ENCODE measurements at regions of chr16 and their contacts with region 1.

Region 1: GRCh38 chr16:78249068-78249467 is 149.6 kb downstream of the WWOX start:
- DNase-seq: peak; percentile 48
- H3K4me3 Mint-ChIP-seq: no peak overlapping the region
- H3K27ac Mint-ChIP-seq: no peak overlapping the region
- H3K4me1 Mint-ChIP-seq: peaks cover 21% of the 10 kb centered on the region
- H3K27me3 Mint-ChIP-seq: no peaks in the 10 kb centered on the region
- CTCF ChIP-seq: peak; percentile 15

Region 2: GRCh38 chr16:78106686-78107085 is 142.4 kb before region 1 on chr16:
- CTCF ChIA-PET with region 1: no interaction called
- intact Hi-C with region 1: no loop called
- DNase-seq: no peak
- H3K4me3 Mint-ChIP-seq: no peak overlapping the region
- H3K27ac Mint-ChIP-seq: no peak overlapping the region
- H3K4me1 Mint-ChIP-seq: no peaks in the 10 kb centered on the region
- H3K27me3 Mint-ChIP-seq: no peaks in the 10 kb centered on the region
- CTCF ChIP-seq: no peak

Region 3: GRCh38 chr16:78375055-78375679 is 126.1 kb after region 1 on chr16:
- CTCF ChIA-PET with region 1: no interaction called
- intact Hi-C with region 1: loop called (anchors 10 kb)
- DNase-seq: no peak
- H3K4me3 Mint-ChIP-seq: no peak overlapping the region
- H3K27ac Mint-ChIP-seq: no peak overlapping the region
- H3K4me1 Mint-ChIP-seq: no peaks in the 10 kb centered on the region
- H3K27me3 Mint-ChIP-seq: no peaks in the 10 kb centered on the region
- CTCF ChIP-seq: no peak

Region 4: DNA sequence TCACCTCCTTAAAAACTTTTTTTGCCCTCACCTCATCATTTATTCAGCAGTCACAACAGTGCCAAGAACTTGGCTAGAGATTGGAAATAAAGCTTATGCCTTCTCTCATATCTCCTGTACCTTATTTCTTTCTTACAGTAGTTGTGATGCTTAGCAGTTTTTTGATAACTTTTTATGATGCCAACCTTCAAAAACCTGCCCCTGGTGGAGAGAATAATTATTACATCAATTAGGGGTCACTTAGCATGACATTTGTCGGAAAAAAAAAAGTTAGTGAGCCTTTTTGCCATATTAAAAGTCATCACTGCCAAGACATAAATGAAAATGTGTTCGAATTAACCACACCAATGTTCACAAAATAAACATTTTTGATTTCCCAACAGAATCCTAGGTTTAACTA is 147.0 kb after region 1 on chr16:
- CTCF ChIA-PET with region 1: no interaction called
- intact Hi-C with region 1: no loop called
- DNase-seq: no peak
- H3K4me3 Mint-ChIP-seq: no peak overlapping the region
- H3K27ac Mint-ChIP-seq: no peak overlapping the region
- H3K4me1 Mint-ChIP-seq: no peaks in the 10 kb centered on the region
- H3K27me3 Mint-ChIP-seq: no peaks in the 10 kb centered on the region
- CTCF ChIP-seq: peak; percentile 17

Region 5: GRCh38 chr16:78483124-78483992 is 234.3 kb after region 1 on chr16:
- CTCF ChIA-PET with region 1: no interaction called
- intact Hi-C with region 1: loop called (anchors 10 kb)
- DNase-seq: peak; percentile 35
- H3K4me3 Mint-ChIP-seq: no peak overlapping the region
- H3K27ac Mint-ChIP-seq: no peak overlapping the region
- H3K4me1 Mint-ChIP-seq: peaks cover 7% of the 10 kb centered on the region
- H3K27me3 Mint-ChIP-seq: no peaks in the 10 kb centered on the region
- CTCF ChIP-seq: no peak